Activated T-helper 1 cell treated with anti-CD3 and anti-CD28 coated beads, Interleukin-12 subunit alpha, Interleukin-12 subunit beta, Interleukin-2, Interleukin-4 antibody, amounts not matched to agents 30 ng/mL and 10 ng/mL and 1 ng/mL, durations not matched to agents 14 hours and 24 hours and 36 hours (primary cell): ENCODE measurements at regions of chr1 and their contacts with region 1.

Region 1: GRCh38 chr1:226736908-226737818 is 1.9 kb downstream of the ITPKB start:
- DNase-seq: peak; percentile 41
- H3K4me3 Mint-ChIP-seq: peak overlapping the region; percentile 90
- H3K27ac Mint-ChIP-seq: peak overlapping the region; percentile 86
- H3K4me1 Mint-ChIP-seq: peaks cover 50% of the 10 kb centered on the region
- H3K27me3 Mint-ChIP-seq: peaks cover 1% of the 10 kb centered on the region

Region 2: DNA sequence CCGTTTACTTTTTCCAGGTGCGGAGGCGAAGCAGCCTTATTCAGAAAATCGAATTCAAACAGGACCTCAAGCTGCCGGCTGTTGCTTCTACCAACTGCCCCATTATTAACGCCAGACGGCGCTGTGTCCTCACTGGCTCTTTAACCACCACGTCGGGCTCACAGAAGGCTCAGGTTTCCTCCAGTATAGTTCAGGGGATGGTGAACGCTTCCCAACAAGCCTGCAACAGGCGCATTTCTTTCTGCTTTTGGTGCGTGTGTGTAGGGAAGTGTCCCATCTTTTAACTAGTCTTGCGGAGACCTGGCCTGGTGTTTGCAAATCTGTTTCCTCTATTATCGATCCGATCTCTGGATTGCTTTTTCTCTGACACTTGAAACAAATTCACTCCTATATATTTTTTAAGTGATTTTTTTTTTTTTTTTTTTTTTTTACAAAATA is 189.4 kb before region 1 on chr1:
- intact Hi-C with region 1: loop called (anchors 5 kb)
- DNase-seq: peak; percentile 11
- H3K4me3 Mint-ChIP-seq: no peak overlapping the region
- H3K27ac Mint-ChIP-seq: no peak overlapping the region
- H3K4me1 Mint-ChIP-seq: peaks cover 5% of the 10 kb centered on the region
- H3K27me3 Mint-ChIP-seq: peaks cover 73% of the 10 kb centered on the region

Region 3: GRCh38 chr1:226590614-226591013 is 146.5 kb before region 1 on chr1:
- intact Hi-C with region 1: no loop called
- DNase-seq: no peak
- H3K4me3 Mint-ChIP-seq: no peak overlapping the region
- H3K27ac Mint-ChIP-seq: no peak overlapping the region
- H3K4me1 Mint-ChIP-seq: no peaks in the 10 kb centered on the region
- H3K27me3 Mint-ChIP-seq: peaks cover 8% of the 10 kb centered on the region

Region 4: GRCh38 chr1:226662642-226663326 is 74.4 kb before region 1 on chr1:
- intact Hi-C with region 1: loop called (anchors 1 kb)
- DNase-seq: peak; percentile 78
- H3K4me3 Mint-ChIP-seq: peak overlapping the region; percentile 58
- H3K27ac Mint-ChIP-seq: peak overlapping the region; percentile 86
- H3K4me1 Mint-ChIP-seq: peaks cover 77% of the 10 kb centered on the region
- H3K27me3 Mint-ChIP-seq: no peaks in the 10 kb centered on the region

Region 5: GRCh38 chr1:226702957-226703831 is 34.0 kb before region 1 on chr1:
- intact Hi-C with region 1: loop called (anchors 1 kb)
- DNase-seq: peak; percentile 81
- H3K4me3 Mint-ChIP-seq: peak overlapping the region; percentile 77
- H3K27ac Mint-ChIP-seq: peak overlapping the region; percentile 89
- H3K4me1 Mint-ChIP-seq: peaks cover 57% of the 10 kb centered on the region
- H3K27me3 Mint-ChIP-seq: no peaks in the 10 kb centered on the region

Region 6: DNA sequence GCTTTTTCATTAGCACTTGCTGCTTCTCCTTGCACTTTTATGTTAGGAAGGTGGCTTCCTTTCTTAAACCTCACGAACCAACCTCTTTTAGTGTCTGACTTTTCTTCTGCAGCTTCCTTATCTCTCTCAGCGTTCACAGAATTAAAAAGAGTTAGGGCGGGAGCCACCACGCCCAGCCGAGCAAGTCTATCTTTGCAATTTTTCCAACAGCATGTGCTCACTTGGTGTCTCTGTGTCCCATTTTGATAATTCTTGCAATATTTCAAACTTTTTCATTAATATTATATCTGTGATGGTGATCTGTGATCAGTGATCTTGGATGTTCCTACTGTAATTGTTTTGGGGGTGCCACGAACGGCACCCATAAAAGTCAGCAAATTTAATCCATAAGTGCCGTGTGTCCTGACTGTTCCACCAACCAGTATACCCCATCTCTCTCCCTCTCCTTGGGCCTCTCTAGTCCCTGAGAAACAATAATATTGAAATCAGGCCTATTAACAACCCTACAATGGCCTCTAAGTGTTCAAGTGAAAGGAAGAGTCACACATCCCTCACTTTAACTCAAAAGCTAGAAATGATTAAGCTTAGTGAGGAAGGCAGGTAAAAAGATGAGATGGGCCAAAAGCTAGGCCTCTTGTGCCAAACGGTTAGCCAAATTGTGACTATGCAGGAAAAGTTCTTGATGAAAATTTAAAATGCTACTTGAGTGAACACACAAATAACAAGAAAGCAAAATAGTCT is 17.8 kb after region 1 on chr1:
- intact Hi-C with region 1: no loop called
- DNase-seq: no peak
- H3K4me3 Mint-ChIP-seq: no peak overlapping the region
- H3K27ac Mint-ChIP-seq: no peak overlapping the region
- H3K4me1 Mint-ChIP-seq: peaks cover 11% of the 10 kb centered on the region
- H3K27me3 Mint-ChIP-seq: peaks cover 2% of the 10 kb centered on the region

Region 7: GRCh38 chr1:226798427-226799411 is 61.6 kb after region 1 on chr1:
- intact Hi-C with region 1: loop called (anchors 1 kb)
- DNase-seq: peak; percentile 63
- H3K4me3 Mint-ChIP-seq: peak overlapping the region; percentile 68
- H3K27ac Mint-ChIP-seq: peak overlapping the region; percentile 88
- H3K4me1 Mint-ChIP-seq: peaks cover 26% of the 10 kb centered on the region
- H3K27me3 Mint-ChIP-seq: peaks cover 16% of the 10 kb centered on the region

Region 8: DNA sequence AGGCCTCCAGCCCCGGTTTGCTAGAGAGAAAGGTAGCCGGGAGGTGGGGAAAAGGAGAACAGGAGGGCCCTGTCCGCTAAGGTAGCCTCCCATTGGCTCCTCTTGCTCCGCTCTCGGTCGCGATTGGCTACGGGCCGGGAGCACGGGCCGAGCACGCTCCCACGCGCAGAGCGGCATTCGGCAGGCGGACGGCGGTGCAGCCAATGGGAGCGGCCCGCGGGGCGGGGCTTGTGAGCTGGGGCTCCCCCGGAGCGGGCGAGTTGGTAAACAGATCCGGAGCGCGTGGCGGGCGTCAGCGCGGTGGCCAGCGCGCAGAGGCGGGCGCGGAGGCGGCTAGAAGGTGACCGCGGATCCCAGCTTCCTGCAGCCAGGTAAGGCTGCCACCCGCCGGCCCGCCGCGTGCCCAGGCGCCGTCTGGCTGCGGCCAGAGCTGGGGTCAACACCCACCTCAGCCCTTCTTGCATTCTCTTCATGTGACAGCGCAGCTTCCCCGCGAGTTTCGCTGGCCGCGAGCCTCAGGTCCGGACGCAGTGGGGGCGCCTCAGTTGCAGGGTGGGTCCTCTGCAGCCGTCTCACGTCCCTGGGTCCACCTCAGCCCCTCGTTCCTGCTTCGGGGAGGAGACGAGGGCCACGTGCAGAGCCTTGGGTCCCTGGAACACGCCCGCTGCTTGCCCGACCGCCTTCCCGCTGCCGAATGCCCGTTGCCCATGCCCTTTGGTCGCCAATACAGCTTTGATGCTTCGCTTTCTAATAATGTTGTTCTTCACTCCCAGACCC is 203.1 kb after region 1 on chr1 and contains the start of gene COQ8A:
- intact Hi-C with region 1: loop called (anchors 1 kb)
- DNase-seq: peak; percentile 100
- H3K4me3 Mint-ChIP-seq: peak within 1 kb of the TSS; percentile 89
- H3K27ac Mint-ChIP-seq: peak within 1 kb of the TSS; percentile 97
- H3K4me1 Mint-ChIP-seq: peaks cover 41% of the 10 kb centered on the region
- H3K27me3 Mint-ChIP-seq: no peaks in the 10 kb centered on the region
- total RNA-seq, gene COQ8A: 33.1 and 33.8 TPM in 2 replicates